MCF 10A (cell line): ENCODE measurements at regions of chr1 and their contacts with region 1.

Region 1: GRCh38 chr1:47262787-47263413 is 30.9 kb upstream of the TAL1 start:
- DNase-seq: peak; percentile 67
- H3K4me3 Mint-ChIP-seq: no peak overlapping the region
- H3K27ac Mint-ChIP-seq: no peak overlapping the region
- H3K4me1 Mint-ChIP-seq: peaks cover 16% of the 10 kb centered on the region
- H3K27me3 Mint-ChIP-seq: no peaks in the 10 kb centered on the region
- CTCF ChIP-seq: peak; percentile 71

Region 2: GRCh38 chr1:47187231-47187925 is 75.5 kb before region 1 on chr1:
- CTCF ChIA-PET with region 1: interaction called, 212 read pairs
- POLR2A ChIA-PET with region 1: interaction called, 23 read pairs
- intact Hi-C with region 1: no loop called
- DNase-seq: no peak
- H3K4me3 Mint-ChIP-seq: peak overlapping the region; percentile 50
- H3K27ac Mint-ChIP-seq: no peak overlapping the region
- H3K4me1 Mint-ChIP-seq: peaks cover 33% of the 10 kb centered on the region
- H3K27me3 Mint-ChIP-seq: no peaks in the 10 kb centered on the region
- CTCF ChIP-seq: no peak

Region 3: DNA sequence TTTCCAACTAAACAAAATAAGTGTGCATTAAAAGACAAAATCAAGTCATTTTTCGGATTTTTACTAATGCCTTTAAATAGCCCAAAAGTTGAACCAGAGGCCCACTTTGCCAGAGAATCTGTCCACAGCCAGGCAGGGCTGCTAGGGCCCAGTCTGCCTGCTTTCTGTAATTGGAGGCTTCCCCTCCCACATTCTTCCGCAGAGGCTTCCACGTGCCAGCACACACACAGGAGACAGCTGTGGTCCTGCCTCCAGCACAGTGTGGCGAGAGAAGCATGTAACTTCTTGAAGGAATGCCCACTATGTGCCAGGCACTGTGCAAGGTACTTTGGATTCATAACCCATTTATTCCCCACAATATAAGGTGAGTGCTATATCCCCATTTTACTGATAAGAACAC is 61.7 kb before region 1 on chr1:
- CTCF ChIA-PET with region 1: interaction called, 24 read pairs
- POLR2A ChIA-PET with region 1: interaction called, 5 read pairs
- intact Hi-C with region 1: no loop called
- DNase-seq: no peak
- H3K4me3 Mint-ChIP-seq: no peak overlapping the region
- H3K27ac Mint-ChIP-seq: no peak overlapping the region
- H3K4me1 Mint-ChIP-seq: no peaks in the 10 kb centered on the region
- H3K27me3 Mint-ChIP-seq: peaks cover 24% of the 10 kb centered on the region
- CTCF ChIP-seq: no peak

Region 4: DNA sequence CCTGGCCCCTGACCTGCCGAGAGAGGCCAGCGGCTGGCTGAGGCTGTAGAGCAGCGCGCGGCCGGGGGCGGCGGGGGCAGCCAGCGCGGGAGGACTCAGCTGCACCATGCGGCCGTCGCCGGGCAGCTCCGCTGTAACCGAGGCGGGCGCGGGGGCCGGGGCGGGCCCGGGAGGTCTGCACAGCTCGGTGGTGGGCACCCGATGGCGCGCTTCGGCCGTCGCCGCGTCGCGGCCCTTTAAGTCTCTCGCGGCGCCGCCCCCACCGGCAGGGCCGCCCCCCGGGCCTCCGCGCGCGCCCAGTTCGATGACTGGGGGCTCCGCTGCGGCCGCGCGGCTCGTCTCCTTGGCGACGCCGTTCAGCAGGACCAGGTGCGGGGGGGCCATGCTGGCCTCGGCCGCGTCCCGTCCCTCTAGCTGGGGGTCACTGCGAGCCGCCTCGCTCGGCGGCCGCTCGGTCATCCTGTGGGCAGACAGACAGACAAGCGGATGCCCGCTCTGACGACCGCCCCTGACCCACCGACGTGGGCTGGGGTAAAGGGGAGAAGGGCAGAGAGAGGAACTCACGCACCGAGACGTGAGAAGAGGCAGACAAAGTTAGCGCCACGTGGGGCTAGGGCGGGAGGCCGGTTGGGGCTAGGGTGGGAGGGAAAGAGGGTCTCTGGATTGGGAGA is 37.3 kb before region 1 on chr1:
- CTCF ChIA-PET with region 1: interaction called, 10 read pairs
- POLR2A ChIA-PET with region 1: no interaction called
- intact Hi-C with region 1: no loop called
- DNase-seq: no peak
- H3K4me3 Mint-ChIP-seq: no peak overlapping the region
- H3K27ac Mint-ChIP-seq: no peak overlapping the region
- H3K4me1 Mint-ChIP-seq: no peaks in the 10 kb centered on the region
- H3K27me3 Mint-ChIP-seq: peaks cover 13% of the 10 kb centered on the region
- CTCF ChIP-seq: no peak

Region 5: GRCh38 chr1:47238935-47239592 is 23.8 kb before region 1 on chr1:
- CTCF ChIA-PET with region 1: interaction called, 10 read pairs
- POLR2A ChIA-PET with region 1: no interaction called
- intact Hi-C with region 1: no loop called
- DNase-seq: no peak
- H3K4me3 Mint-ChIP-seq: no peak overlapping the region
- H3K27ac Mint-ChIP-seq: no peak overlapping the region
- H3K4me1 Mint-ChIP-seq: peaks cover 6% of the 10 kb centered on the region
- H3K27me3 Mint-ChIP-seq: no peaks in the 10 kb centered on the region
- CTCF ChIP-seq: no peak

Region 6: GRCh38 chr1:47276850-47277249 is 13.9 kb after region 1 on chr1:
- CTCF ChIA-PET with region 1: interaction called, 19 read pairs
- POLR2A ChIA-PET with region 1: interaction called, 5 read pairs
- intact Hi-C with region 1: no loop called
- DNase-seq: no peak
- H3K4me3 Mint-ChIP-seq: no peak overlapping the region
- H3K27ac Mint-ChIP-seq: no peak overlapping the region
- H3K4me1 Mint-ChIP-seq: peaks cover 8% of the 10 kb centered on the region
- H3K27me3 Mint-ChIP-seq: no peaks in the 10 kb centered on the region
- CTCF ChIP-seq: no peak

Region 7: GRCh38 chr1:47313915-47314664 is 51.2 kb after region 1 on chr1 and contains the start of gene STIL:
- CTCF ChIA-PET with region 1: interaction called, 6 read pairs
- POLR2A ChIA-PET with region 1: interaction called, 13 read pairs
- intact Hi-C with region 1: no loop called
- DNase-seq: peak; percentile 99
- H3K4me3 Mint-ChIP-seq: peak within 1 kb of the TSS; percentile 91
- H3K27ac Mint-ChIP-seq: peak within 1 kb of the TSS; percentile 94
- H3K4me1 Mint-ChIP-seq: peaks cover 5% of the 10 kb centered on the region
- H3K27me3 Mint-ChIP-seq: no peaks in the 10 kb centered on the region
- CTCF ChIP-seq: no peak
- total RNA-seq, gene STIL: 8.8 and 12.6 TPM in 2 replicates

Region 8: DNA sequence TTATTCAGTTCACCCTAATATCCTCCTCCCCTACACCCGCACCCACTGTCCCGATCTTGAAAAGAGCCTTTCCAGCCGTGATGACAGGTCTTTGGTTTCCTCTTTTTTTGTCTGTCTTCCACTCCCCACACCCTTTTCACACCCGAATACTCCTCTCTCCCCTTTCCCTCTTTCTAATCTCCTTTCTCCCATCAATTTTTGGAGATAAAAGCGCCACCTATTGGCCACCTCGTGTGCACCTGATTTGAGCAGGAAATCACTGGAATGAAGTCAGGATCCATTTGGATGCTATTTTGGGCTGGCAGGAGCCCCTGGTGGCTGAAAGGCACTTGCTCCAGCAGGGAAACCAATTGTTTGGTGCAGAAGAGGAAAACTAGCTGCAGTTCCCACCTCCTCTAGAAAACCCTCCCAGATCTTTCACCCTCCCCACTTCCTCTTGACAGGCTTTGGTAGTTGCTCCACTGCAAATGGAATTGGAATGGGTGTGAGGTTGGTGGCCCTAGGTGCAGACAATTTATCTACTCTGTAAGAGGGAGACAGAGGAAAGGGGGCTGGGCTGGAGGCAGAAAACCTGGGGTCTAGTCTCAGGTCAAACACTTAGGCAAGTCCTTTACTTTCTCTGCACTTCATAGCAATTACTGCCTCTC is 161.6 kb after region 1 on chr1:
- CTCF ChIA-PET with region 1: no interaction called
- POLR2A ChIA-PET with region 1: no interaction called
- intact Hi-C with region 1: no loop called
- DNase-seq: peak; percentile 81
- H3K4me3 Mint-ChIP-seq: no peak overlapping the region
- H3K27ac Mint-ChIP-seq: no peak overlapping the region
- H3K4me1 Mint-ChIP-seq: peaks cover 11% of the 10 kb centered on the region
- H3K27me3 Mint-ChIP-seq: no peaks in the 10 kb centered on the region
- CTCF ChIP-seq: peak; percentile 68

Region 9: DNA sequence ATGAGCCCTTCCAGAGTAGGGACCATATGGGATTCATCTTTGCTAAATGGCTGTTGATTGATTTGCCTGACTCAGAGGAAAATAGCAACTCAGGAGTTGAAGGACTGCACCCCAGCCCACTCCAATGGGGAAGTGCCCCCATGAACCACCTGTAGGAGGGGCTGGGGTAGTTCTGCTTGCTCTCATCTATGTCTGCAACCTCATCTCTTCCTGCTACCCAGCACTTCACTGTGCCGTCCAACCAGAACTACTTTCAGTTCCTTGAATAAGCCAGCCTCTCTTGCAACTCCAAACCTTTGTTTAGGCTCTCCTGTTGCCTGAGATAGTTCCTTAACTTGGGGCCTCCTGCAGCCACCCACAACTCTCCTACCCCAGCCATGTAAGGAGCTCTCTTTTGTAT is 1487.2 kb after region 1 on chr1:
- CTCF ChIA-PET with region 1: no interaction called
- POLR2A ChIA-PET with region 1: no interaction called
- intact Hi-C with region 1: no loop called
- DNase-seq: no peak
- H3K4me3 Mint-ChIP-seq: no peak overlapping the region
- H3K27ac Mint-ChIP-seq: no peak overlapping the region
- H3K4me1 Mint-ChIP-seq: no peaks in the 10 kb centered on the region
- H3K27me3 Mint-ChIP-seq: peaks cover 12% of the 10 kb centered on the region
- CTCF ChIP-seq: no peak